Dendritic cell treated with granulocyte-macrophage colony-stimulating factor and Interleukin-4, amounts not matched to agents 40 ng/mL and 50 ng/mL, for 4 days (primary cell): ENCODE measurements at regions of chr6 and their contacts with region 1.

Region 1: GRCh38 chr6:125790358-125791150 is at the start of gene NCOA7:
- H3K4me3 Mint-ChIP-seq: peak within 1 kb of the TSS; percentile 82
- H3K27ac Mint-ChIP-seq: peak within 1 kb of the TSS; percentile 97
- H3K4me1 Mint-ChIP-seq: peaks cover 30% of the 10 kb centered on the region
- H3K27me3 Mint-ChIP-seq: no peaks in the 10 kb centered on the region

Region 2: GRCh38 chr6:125779924-125780539 is 10.5 kb before region 1 on chr6:
- intact Hi-C with region 1: loop called (anchors 1 kb)
- H3K4me3 Mint-ChIP-seq: no peak overlapping the region
- H3K27ac Mint-ChIP-seq: no peak overlapping the region
- H3K4me1 Mint-ChIP-seq: no peaks in the 10 kb centered on the region
- H3K27me3 Mint-ChIP-seq: peaks cover 18% of the 10 kb centered on the region

Region 3: GRCh38 chr6:125834348-125834747 is 43.8 kb after region 1 on chr6:
- intact Hi-C with region 1: loop called (anchors 5 kb)
- H3K4me3 Mint-ChIP-seq: no peak overlapping the region
- H3K27ac Mint-ChIP-seq: no peak overlapping the region
- H3K4me1 Mint-ChIP-seq: peaks cover 52% of the 10 kb centered on the region
- H3K27me3 Mint-ChIP-seq: no peaks in the 10 kb centered on the region